Breast epithelium (tissue), 4 donors: ENCODE measurements at regions of chr16 and their contacts with region 1.

Region 1: GRCh38 chr16:71358464-71358998 is at the start of gene CALB2:
- DNase-seq: peak; percentile 46 to 67
- H3K4me3 ChIP-seq: peak within 1 kb of the TSS; percentile 10 to 59 (median 38)
- H3K27ac ChIP-seq: no peak within 1 kb of the TSS
- H3K4me1 ChIP-seq: no peaks in the 10 kb centered on the region
- H3K27me3 ChIP-seq: peaks cover 0 to 8% of the 10 kb centered on the region in 2 donors
- CTCF ChIP-seq: peak; percentile 38 to 90 (median 39)
- POLR2A ChIP-seq: no peak
- total RNA-seq, gene CALB2: 7.5 to 169 (median 22.2) TPM

Region 2: DNA sequence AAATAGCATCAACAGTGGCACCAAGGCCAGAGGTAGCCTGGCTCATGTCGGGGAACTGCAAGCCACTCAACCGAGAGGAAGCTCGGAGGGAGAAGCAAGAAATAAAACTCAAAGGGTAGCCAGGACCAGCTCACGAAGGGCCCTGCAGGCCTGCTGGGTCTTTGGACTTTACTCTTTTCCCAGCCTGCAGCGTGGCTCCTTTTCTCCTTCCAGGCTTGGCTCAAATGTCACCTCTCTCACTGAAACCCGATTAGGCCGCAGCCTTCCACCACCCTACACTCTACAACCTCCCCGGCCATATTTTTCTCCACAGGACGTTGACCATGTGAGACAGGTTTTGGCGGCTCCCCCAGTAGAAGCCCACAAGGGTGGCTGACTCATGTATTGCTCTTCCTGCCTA is 38.1 kb after region 1 on chr16:
- intact Hi-C with region 1: no loop called
- DNase-seq: no peak
- H3K4me3 ChIP-seq: no peak overlapping the region
- H3K27ac ChIP-seq: no peak overlapping the region
- H3K4me1 ChIP-seq: no peaks in the 10 kb centered on the region
- H3K27me3 ChIP-seq: no peaks in the 10 kb centered on the region
- CTCF ChIP-seq: no peak
- POLR2A ChIP-seq: no peak

Region 3: DNA sequence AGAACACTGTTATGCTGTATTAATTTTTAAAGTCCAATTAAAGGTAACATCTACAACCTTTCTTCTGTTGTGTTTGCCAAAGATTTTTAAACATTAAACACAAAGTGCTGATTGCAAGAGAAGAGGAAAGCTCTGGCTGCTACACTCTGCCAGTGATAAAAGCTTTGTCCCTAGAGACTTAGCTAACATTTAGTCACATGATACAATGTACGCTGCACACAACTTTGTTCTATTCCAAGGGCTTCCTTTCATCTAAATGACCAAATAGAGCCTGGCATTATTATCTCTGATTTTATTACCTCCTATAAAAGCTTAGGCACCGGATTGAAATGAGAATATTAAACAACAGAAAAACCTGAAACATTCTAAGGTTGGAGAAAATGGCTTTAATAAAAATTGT is 1202.1 kb after region 1 on chr16:
- intact Hi-C with region 1: loop called (anchors 10 kb)
- DNase-seq: no peak
- H3K4me3 ChIP-seq: no peak overlapping the region
- H3K27ac ChIP-seq: no peak overlapping the region
- H3K4me1 ChIP-seq: no peaks in the 10 kb centered on the region
- H3K27me3 ChIP-seq: no peaks in the 10 kb centered on the region
- CTCF ChIP-seq: no peak
- POLR2A ChIP-seq: no peak